ENCODE measurements at regions of chr6 and their contacts with region 1.

Region 1: GRCh38 chr6:157849288-157850017 is 26.4 kb downstream of the SNX9 start:
- DNase-seq: no peak
- H3K4me3 ChIP-seq: no peak overlapping the region
- H3K27ac ChIP-seq: no peak overlapping the region
- H3K4me1 ChIP-seq: peaks cover 0 to 12% (median 9%) of the 10 kb centered on the region in 3 donors
- H3K27me3 ChIP-seq: no peaks in the 10 kb centered on the region
- CTCF ChIP-seq: no peak

Region 2: GRCh38 chr6:157667211-157668008 is 182.0 kb before region 1 on chr6:
- intact Hi-C with region 1: no loop called
- DNase-seq: peak in 3 of 5 donors; percentile 77 to 91 (median 89)
- H3K4me3 ChIP-seq: no peak overlapping the region
- H3K27ac ChIP-seq: no peak overlapping the region
- H3K4me1 ChIP-seq: peaks cover 0 to 4% (median 0%) of the 10 kb centered on the region in 3 donors
- H3K27me3 ChIP-seq: no peaks in the 10 kb centered on the region
- CTCF ChIP-seq: peak; percentile 91

Region 3: GRCh38 chr6:157756708-157757429 is 92.6 kb before region 1 on chr6:
- intact Hi-C with region 1: loop called (anchors 10 kb)
- DNase-seq: peak; percentile 89 to 94 (median 92)
- H3K4me3 ChIP-seq: no peak overlapping the region
- H3K27ac ChIP-seq: peak overlapping the region; percentile 16 to 52
- H3K4me1 ChIP-seq: peaks cover 0 to 14% (median 14%) of the 10 kb centered on the region in 3 donors
- H3K27me3 ChIP-seq: no peaks in the 10 kb centered on the region
- CTCF ChIP-seq: peak; percentile 92